ENCODE measurements at regions of chr12 and their contacts with region 1.

Region 1: DNA sequence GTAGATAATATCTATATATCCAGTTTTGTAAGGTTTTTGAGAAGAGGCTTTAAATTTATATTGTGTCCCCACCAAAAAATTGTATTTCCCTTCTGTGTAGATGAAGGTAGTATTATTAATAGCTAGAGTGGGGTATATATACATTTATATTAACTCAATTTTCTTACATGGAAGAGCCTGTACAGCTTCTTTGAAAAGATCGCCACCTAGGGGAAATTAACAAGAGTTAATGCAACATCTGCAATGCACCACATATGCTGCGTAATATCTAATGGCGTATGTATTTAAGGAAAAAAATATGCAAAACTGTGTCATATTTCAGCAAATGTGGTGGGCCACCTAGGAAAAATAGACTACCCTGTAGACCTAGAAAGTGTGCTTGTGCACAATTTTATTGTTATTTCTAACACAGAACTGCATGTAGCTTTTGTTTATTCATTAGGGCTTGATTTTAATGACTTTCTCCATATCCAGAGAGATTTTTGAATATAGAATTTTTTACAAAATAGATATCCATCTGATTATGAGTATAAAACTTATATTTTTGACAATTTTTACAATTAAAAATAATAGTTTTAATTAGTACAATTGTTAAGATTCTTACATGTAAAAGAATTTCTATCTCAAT is 14.0 kb downstream of the CCER1 start:
- DNase-seq: peak; percentile 78
- ATAC-seq: peak; percentile 49
- H3K4me3 ChIP-seq: no peak overlapping the region
- H3K27ac ChIP-seq: no peak overlapping the region
- H3K4me1 ChIP-seq: peaks cover 38% of the 10 kb centered on the region
- H3K27me3 ChIP-seq: no peaks in the 10 kb centered on the region
- CTCF ChIP-seq: peak; percentile 83

Region 2: DNA sequence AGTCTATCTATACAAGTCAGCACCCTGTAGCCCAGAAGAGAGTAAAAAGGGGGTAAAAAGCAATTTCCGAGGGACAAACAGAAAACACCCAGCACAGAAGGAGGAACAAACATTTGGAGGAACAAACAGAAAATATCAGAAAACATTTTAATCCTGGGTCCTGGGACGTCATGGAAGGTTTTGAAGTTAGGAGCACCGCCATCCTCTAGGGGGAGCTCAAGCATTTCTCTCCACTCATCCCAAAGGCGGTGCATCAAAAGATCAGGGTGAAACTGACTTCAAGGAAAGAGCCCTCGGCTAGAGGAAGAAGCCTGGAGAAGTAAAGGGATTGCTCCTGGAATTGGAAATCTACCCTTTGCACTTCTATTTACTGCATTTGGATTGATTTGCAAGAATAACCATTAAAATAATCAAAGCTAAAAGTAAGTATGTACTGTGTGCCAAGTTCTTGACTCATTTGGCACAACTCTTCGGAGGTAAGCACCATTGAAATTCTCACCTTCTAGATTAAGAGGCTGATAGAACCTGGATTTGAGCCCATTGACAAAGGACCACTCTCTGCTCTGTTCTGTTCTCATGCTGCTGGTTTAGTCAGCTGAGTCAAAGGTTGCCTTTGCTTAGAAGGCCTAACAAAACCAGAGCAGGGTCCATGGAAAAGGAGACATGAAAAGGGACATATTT is 1397.9 kb before region 1 on chr12:
- CTCF ChIA-PET with region 1: no interaction called
- POLR2A ChIA-PET with region 1: no interaction called
- intact Hi-C with region 1: loop called (anchors 5 kb)
- DNase-seq: peak; percentile 91
- ATAC-seq: peak; percentile 94
- H3K4me3 ChIP-seq: no peak overlapping the region
- H3K27ac ChIP-seq: peak overlapping the region; percentile 7
- H3K4me1 ChIP-seq: peaks cover 6% of the 10 kb centered on the region
- H3K27me3 ChIP-seq: no peaks in the 10 kb centered on the region
- CTCF ChIP-seq: peak; percentile 96

Region 3: DNA sequence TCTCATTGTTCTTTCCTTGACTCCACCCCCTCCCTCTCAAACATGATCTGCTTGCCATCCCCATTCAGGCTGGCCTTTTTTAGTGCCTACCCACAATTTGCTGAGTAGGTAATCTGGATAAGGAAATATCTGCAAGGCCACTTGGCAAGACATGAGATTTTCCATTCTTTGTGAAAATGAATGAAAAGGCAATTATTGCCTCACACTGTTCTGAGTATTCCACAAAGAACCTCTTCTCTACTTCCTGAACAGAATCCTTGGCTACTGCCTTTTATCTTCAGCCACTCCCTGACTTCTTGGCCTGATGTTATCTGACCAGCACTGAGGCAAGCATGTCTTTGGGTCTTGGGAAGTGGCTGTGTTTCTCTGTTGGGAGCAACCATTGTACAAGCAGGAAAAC is 969.1 kb before region 1 on chr12:
- CTCF ChIA-PET with region 1: no interaction called
- POLR2A ChIA-PET with region 1: no interaction called
- intact Hi-C with region 1: no loop called
- DNase-seq: no peak
- ATAC-seq: no peak
- H3K4me3 ChIP-seq: no peak overlapping the region
- H3K27ac ChIP-seq: no peak overlapping the region
- H3K4me1 ChIP-seq: peaks cover 25% of the 10 kb centered on the region
- H3K27me3 ChIP-seq: no peaks in the 10 kb centered on the region
- CTCF ChIP-seq: no peak

Region 4: DNA sequence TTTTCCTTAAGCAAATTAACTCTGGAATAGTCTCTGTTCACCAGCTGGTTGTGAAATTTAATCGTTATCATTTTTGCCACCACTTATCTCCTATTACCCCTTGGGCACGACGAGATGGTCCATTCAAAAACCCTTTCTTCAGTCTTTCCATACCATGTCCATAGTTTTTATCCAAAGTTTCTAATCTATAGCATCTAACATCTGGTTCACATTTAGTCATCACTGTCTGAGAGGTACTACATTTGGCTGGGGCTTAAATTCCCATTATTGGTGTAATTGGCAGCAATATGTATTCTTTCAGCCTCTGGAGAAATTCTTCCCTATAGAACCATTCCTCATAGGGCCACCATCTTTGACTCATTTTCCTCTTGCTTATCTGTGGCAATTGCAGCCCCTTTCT is 149.5 kb before region 1 on chr12:
- CTCF ChIA-PET with region 1: no interaction called
- POLR2A ChIA-PET with region 1: no interaction called
- intact Hi-C with region 1: loop called (anchors 2 kb)
- DNase-seq: no peak
- ATAC-seq: no peak
- H3K4me3 ChIP-seq: no peak overlapping the region
- H3K27ac ChIP-seq: no peak overlapping the region
- H3K4me1 ChIP-seq: no peaks in the 10 kb centered on the region
- H3K27me3 ChIP-seq: no peaks in the 10 kb centered on the region
- CTCF ChIP-seq: no peak

Region 5: GRCh38 chr12:90909069-90909770 is 31.8 kb before region 1 on chr12:
- CTCF ChIA-PET with region 1: no interaction called
- POLR2A ChIA-PET with region 1: no interaction called
- intact Hi-C with region 1: loop called (anchors 5 kb)
- DNase-seq: peak; percentile 75
- ATAC-seq: peak; percentile 58
- H3K4me3 ChIP-seq: no peak overlapping the region
- H3K27ac ChIP-seq: no peak overlapping the region
- H3K4me1 ChIP-seq: 0 out of 2 replicates have a peak, but pooled peaks cover 10% of the 10 kb centered on the region
- H3K27me3 ChIP-seq: no peaks in the 10 kb centered on the region
- CTCF ChIP-seq: peak; percentile 92

Region 6: GRCh38 chr12:90959538-90960139 is 18.7 kb after region 1 on chr12:
- CTCF ChIA-PET with region 1: interaction called, 18 read pairs
- POLR2A ChIA-PET with region 1: no interaction called
- intact Hi-C with region 1: no loop called
- DNase-seq: peak; percentile 77
- ATAC-seq: peak; percentile 81
- H3K4me3 ChIP-seq: no peak overlapping the region
- H3K27ac ChIP-seq: no peak overlapping the region
- H3K4me1 ChIP-seq: 0 out of 2 replicates have a peak, but pooled peaks cover 3% of the 10 kb centered on the region
- H3K27me3 ChIP-seq: no peaks in the 10 kb centered on the region
- CTCF ChIP-seq: peak; percentile 70

Measured in PC-3 (cell line).